Cardiac septum (tissue), 1 donor: ENCODE measurements at regions of chr17 and their contacts with region 1.

Region 1: GRCh38 chr17:76240461-76241203 is at the start of gene RNF157:
- DNase-seq: peak; percentile 87
- total RNA-seq, gene RNF157: 2.5 TPM

Region 2: GRCh38 chr17:76262732-76263344 is 22.2 kb after region 1 on chr17:
- intact Hi-C with region 1: loop called (anchors 2 kb)
- DNase-seq: no peak